Natural killer cell (primary cell): ENCODE measurements at regions of chr14 and their contacts with region 1.

Region 1: DNA sequence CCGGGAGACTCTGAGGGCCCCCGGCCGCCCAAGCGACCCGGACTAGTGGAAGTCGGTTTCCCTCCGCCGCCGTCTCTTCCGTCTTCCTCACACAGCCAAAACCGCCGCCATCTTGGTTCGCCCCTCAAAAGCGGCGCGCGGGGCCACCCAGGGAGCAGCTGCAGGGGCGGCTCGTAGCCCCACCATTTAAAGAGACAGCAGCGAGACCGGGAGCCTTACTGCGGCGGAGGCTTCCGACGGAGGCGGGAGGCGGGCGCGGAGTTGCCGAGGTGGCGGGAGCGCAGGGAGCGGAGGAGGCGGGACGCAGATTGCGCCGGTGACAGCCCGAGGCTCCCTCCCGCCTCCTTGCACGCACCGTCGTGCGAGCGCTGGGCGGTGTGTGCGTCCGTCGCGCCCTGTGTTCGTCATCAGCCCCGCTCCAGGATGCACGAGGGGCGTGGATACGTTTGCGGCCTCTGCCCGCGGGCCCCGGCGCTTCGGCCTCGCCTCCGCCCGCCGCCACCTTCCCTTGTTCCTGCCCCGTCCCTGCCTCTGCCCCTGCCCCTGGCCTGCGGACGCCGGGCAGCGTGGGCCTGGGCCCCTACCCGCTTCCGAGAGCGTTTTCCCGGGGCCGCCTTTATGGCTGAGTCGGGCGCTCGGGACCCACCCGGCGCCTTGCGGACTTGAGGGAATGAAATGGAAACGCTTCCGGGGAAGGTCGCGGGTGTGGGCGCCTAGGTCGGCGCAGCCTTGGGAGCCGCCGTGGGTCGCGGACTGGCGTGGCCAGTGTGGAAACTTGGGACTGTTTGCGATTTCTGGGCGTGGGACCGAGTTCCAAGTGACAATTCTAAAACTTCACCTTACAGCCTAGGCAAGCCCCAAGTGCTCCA is at the start of gene PPP4R3A:
- DNase-seq: peak; percentile 92 to 98
- ATAC-seq: peak; percentile 83 to 93 (median 84)
- H3K4me3 ChIP-seq: peak within 1 kb of the TSS; percentile 100
- H3K4me3 Mint-ChIP-seq: peak within 1 kb of the TSS; percentile 100
- H3K27ac ChIP-seq: peak within 1 kb of the TSS; percentile 99
- H3K27ac Mint-ChIP-seq: peak within 1 kb of the TSS; percentile 99 to 100
- H3K4me1 ChIP-seq: peaks cover 25% of the 10 kb centered on the region
- H3K4me1 Mint-ChIP-seq: peaks cover 18 to 35% of the 10 kb centered on the region in 2 donors
- H3K27me3 ChIP-seq: no peaks in the 10 kb centered on the region
- H3K27me3 Mint-ChIP-seq: no peaks in the 10 kb centered on the region
- CTCF ChIP-seq: no peak
- total RNA-seq, gene PPP4R3A: 168 to 216 (median 180) TPM

Region 2: GRCh38 chr14:91493169-91493568 is 17.2 kb before region 1 on chr14:
- intact Hi-C with region 1: loop called (anchors 2 kb)
- DNase-seq: no peak
- ATAC-seq: no peak
- H3K4me3 ChIP-seq: no peak overlapping the region
- H3K4me3 Mint-ChIP-seq: peak overlapping the region; percentile 2
- H3K27ac ChIP-seq: no peak overlapping the region
- H3K27ac Mint-ChIP-seq: peak overlapping the region in 1 of 2 donors; percentile 74
- H3K4me1 ChIP-seq: peaks cover 42% of the 10 kb centered on the region
- H3K4me1 Mint-ChIP-seq: peaks cover 63 to 74% of the 10 kb centered on the region in 2 donors
- H3K27me3 ChIP-seq: no peaks in the 10 kb centered on the region
- H3K27me3 Mint-ChIP-seq: no peaks in the 10 kb centered on the region
- CTCF ChIP-seq: no peak